Right ventricle myocardium inferior (tissue), 1 donor: ENCODE measurements at regions of chr7 and their contacts with region 1.

Region 1: DNA sequence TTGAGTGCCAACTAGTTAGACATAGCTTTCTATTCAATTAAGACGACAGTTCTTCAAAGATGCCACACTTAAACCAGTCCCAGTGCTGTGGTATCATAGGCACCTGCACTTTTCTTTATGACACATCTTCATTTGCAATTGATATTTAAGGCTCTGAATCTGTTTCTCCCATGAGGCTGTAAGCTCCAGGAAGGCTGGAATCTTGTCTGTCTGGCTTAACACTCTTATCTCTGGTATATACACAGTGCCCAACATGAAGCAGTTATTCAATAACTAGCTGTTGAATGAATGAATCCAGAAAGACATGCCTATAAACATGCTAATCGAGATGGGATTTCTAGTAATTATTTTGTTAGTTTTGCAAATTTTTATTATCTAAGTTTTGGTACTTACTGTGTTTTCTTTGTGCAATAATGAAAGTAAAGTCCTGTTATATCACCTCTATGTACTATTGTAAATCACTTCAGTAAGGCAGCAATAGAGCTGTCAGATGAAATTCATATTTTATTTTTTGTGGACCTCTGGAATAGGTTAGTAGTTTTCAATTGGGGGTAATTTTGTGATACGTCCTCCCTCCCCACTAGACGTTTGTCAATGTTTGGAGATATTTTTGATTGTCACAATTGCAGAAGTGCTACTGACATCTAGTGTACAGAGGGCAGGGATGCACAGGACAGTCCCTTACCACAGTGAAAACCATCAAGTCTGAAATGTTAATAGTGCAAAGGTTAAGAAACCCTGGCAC is 51.3 kb upstream of the STEAP4 start:
- DNase-seq: no peak
- ATAC-seq: peak; percentile 83

Region 2: DNA sequence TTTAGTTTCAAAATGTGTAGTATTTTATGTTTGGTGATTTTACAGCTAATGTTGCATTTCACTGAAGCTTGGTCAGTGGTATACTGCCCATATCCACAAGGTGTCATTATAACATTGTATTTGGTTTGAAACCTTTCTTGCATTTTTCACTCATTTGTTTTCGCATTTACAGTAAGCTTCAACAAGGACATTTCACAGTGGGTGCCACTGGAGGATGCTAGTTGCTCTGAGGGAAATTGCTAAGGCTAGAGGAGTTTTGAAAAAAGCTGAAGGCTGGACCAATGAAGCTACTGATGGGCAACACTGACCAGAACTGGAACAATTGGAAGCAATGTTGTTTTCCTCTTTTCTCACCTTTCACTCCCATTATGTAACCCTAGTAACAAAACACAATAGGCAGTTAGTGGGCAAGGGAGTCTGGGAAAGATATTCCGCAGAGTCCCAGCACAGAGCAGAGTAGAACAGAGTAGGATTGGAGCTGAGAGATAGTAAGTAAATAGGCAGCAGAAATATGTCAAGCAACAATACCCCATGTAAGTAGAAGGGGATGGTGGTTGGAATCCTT is 114.5 kb before region 1 on chr7:
- intact Hi-C with region 1: loop called (anchors 1 kb)
- DNase-seq: no peak
- ATAC-seq: peak; percentile 90

Region 3: DNA sequence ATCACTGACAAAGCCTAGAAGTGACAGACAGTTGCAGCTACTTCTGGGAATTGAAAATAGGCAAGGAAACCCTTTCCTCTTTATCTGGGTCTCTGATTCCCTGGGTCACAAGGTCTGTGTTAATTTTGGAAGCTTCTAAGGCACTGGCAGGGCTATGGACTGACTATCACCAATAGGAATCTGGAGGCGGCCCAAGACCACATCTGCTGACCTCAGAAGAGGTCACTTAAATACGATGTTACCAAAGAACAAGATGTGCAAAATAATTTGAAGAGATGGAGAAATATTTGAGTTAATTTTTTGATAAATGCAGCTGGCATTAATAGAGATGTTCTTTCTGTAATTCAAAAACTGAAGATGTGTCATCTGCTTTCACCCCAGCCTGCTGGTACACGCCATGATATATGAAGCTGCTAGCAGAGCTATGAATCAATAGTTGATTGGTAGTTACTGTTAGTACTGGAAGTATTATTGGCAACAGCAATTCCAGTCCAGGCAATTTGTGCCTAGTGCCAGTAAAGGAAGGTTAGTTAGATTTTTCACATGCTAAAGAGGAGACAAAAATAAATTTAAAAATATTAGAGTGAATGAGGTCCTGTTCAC is 45.8 kb before region 1 on chr7:
- intact Hi-C with region 1: loop called (anchors 5 kb)
- DNase-seq: peak; percentile 77
- ATAC-seq: peak; percentile 93

Region 4: GRCh38 chr7:88437132-88437531 is 79.2 kb after region 1 on chr7:
- intact Hi-C with region 1: no loop called
- DNase-seq: no peak
- ATAC-seq: no peak